ENCODE measurements at regions of chr21 and their contacts with region 1.

Region 1: GRCh38 chr21:26850108-26850643 is 5.0 kb upstream of the ADAMTS1 start:
- DNase-seq: no peak
- H3K4me3 Mint-ChIP-seq: no peak overlapping the region
- H3K27ac Mint-ChIP-seq: no peak overlapping the region
- H3K4me1 Mint-ChIP-seq: peaks cover 20% of the 10 kb centered on the region
- H3K27me3 Mint-ChIP-seq: peaks cover 38% of the 10 kb centered on the region

Region 2: GRCh38 chr21:26834181-26834945 is 15.8 kb before region 1 on chr21:
- intact Hi-C with region 1: no loop called
- DNase-seq: no peak
- H3K4me3 Mint-ChIP-seq: no peak overlapping the region
- H3K27ac Mint-ChIP-seq: peak overlapping the region; percentile 31
- H3K4me1 Mint-ChIP-seq: peaks cover 48% of the 10 kb centered on the region
- H3K27me3 Mint-ChIP-seq: peaks cover 13% of the 10 kb centered on the region

Region 3: DNA sequence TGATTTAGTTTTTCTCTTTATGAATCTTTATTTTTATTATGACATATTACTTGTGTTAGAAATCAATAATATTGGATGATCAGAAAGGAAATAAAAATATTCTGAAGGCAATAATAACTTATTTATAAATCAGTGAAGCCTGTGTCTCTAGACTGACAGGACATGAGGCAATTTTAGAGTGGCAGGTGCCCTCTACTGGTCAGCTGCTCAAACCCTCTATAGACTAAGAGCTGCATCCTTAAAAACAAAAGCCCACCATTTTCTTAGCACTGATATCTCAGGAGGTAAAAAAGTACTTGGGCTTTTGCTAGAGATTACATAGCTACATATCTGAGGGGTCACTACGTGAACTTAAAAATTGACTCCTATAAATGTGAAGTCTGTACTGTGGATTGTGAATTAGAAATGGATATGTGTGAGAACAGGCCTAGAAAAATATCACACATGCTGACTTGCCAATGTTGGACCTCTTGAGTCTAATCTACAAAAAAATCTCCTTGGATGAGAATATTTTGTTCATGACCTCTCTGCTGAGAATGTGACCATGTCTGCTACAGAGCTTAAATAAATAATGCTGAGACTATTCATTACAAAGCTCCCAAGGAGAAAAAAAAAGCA is 714.6 kb after region 1 on chr21:
- intact Hi-C with region 1: loop called (anchors 2 kb)
- DNase-seq: no peak
- H3K4me3 Mint-ChIP-seq: no peak overlapping the region
- H3K27ac Mint-ChIP-seq: no peak overlapping the region
- H3K4me1 Mint-ChIP-seq: no peaks in the 10 kb centered on the region
- H3K27me3 Mint-ChIP-seq: no peaks in the 10 kb centered on the region

Region 4: GRCh38 chr21:28336314-28336713 is 1486.1 kb after region 1 on chr21:
- intact Hi-C with region 1: loop called (anchors 2 kb)
- DNase-seq: no peak
- H3K4me3 Mint-ChIP-seq: no peak overlapping the region
- H3K27ac Mint-ChIP-seq: no peak overlapping the region
- H3K4me1 Mint-ChIP-seq: no peaks in the 10 kb centered on the region
- H3K27me3 Mint-ChIP-seq: no peaks in the 10 kb centered on the region